AG04449 (cell line): ENCODE measurements at regions of chr19 and their contacts with region 1.

Region 1: DNA sequence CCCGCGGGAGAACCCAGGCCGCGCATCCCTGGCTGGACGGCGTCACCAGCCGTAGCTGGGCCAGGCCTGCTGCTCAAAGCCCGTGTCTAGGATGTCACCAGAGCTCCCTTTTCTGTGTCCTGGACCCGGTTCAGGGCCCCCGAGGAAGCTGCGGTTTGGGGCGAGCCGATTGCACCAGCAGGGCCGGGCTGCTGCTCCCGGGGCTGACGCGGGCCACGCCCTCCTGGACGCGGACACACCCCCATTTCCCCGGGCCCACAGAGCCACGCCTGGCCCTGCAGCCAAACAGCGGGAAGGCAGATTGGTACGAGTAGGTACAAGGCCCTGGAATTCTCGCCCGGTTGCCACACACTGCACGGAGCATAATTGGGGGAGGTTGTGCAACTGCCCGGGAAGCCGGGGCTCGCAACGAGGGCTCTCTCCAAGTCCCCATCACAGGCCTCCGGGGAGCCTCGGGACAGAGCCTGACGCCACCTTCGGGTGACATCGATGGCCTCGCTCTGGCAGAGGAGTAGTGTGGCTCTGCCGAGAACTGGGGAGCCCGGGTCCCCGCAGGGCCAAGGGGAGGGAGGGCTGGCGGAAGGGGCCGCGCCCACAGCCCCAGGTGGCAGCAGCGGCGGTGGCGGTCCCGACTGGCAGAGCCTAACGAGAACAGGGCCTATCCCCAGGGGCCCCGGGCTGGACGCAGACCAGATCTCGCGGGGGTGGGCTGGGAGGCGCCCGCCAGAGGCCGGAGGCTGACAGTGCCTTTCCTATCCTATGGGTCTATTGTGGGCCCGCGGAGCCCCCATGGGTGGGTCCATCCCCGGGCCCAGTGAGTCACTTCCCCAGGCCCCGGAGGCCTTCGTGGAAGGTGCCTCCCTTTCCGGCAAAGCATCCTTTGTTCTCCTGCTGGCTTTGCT is 23.5 kb downstream of the KCTD15 start:
- DNase-seq: no peak
- H3K4me3 ChIP-seq: peak overlapping the region; percentile 44
- CTCF ChIP-seq: no peak

Region 2: DNA sequence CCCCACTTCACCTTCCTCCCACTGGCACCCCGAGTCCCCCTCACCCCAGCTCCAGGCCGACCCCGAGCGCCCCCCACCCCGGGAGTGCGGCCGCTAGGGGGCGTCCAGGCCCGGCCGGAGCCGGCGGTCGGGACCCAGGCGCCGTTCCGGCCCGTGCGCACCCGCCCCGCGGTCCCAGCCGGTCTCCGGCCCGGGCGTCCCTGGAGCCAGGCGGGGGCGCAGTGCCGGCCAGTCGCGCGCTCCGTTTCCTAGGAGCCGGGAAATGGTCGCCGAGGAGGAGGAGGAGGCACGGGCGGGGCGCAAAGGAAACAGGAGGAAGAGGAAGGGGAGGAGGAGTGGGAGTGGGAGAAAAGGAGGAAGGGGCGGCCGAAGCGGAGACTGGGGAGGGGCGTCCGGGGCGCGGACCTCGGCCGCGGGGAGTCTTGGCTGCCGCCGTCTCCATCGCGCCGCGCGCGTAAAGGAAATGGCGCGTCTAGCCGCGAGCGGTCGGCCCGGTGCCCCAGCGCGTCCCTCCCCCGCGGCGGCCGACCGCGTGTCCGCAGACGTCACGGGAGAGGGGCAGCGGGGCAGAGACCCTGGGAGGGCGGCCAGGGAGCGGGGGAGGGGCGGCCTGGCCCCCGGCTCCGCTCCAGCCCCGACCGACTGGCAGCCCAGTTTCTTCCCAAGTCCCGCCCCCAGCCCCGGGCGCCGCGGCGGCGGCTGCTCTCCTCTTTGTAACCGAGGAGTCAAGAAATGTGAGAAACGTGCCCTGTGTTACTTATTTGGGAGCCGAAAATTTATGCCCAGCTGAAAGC is 24.6 kb before region 1 on chr19:
- CTCF ChIA-PET with region 1: interaction called, 11 read pairs
- POLR2A ChIA-PET with region 1: interaction called, 3 read pairs
- DNase-seq: no peak
- H3K4me3 ChIP-seq: peak overlapping the region; percentile 74
- CTCF ChIP-seq: peak; percentile 68

Region 3: GRCh38 chr19:33905937-33906576 is 85.9 kb after region 1 on chr19:
- CTCF ChIA-PET with region 1: no interaction called
- POLR2A ChIA-PET with region 1: no interaction called
- DNase-seq: no peak
- H3K4me3 ChIP-seq: peak overlapping the region; percentile 18; the same call in 1 of the 2 replicates
- CTCF ChIP-seq: no peak